ENCODE measurements at regions of chr2 and their contacts with region 1.

Region 1: GRCh38 chr2:145927131-145927950 is 1407.4 kb upstream of the ZEB2 start:
- DNase-seq: no peak
- H3K4me3 ChIP-seq: no peak overlapping the region
- H3K27ac ChIP-seq: no peak overlapping the region
- H3K4me1 ChIP-seq: no peaks in the 10 kb centered on the region
- H3K27me3 ChIP-seq: no peaks in the 10 kb centered on the region
- CTCF ChIP-seq: no peak
- POLR2A ChIP-seq: no peak

Region 2: GRCh38 chr2:145644820-145645302 is 282.5 kb before region 1 on chr2:
- intact Hi-C with region 1: loop called (anchors 5 kb)
- DNase-seq: no peak
- H3K4me3 ChIP-seq: no peak overlapping the region
- H3K27ac ChIP-seq: no peak overlapping the region
- H3K4me1 ChIP-seq: no peaks in the 10 kb centered on the region
- H3K27me3 ChIP-seq: no peaks in the 10 kb centered on the region
- CTCF ChIP-seq: no peak
- POLR2A ChIP-seq: no peak

Region 3: GRCh38 chr2:146147448-146148012 is 220.2 kb after region 1 on chr2:
- intact Hi-C with region 1: no loop called
- DNase-seq: no peak
- H3K4me3 ChIP-seq: no peak overlapping the region
- H3K27ac ChIP-seq: no peak overlapping the region
- H3K4me1 ChIP-seq: no peaks in the 10 kb centered on the region
- H3K27me3 ChIP-seq: no peaks in the 10 kb centered on the region
- CTCF ChIP-seq: no peak
- POLR2A ChIP-seq: no peak

Measured in breast epithelium (tissue), 4 donors.